ENCODE measurements at regions of chr5 and their contacts with region 1.

Region 1: GRCh38 chr5:45542421-45542820 is 153.8 kb downstream of the HCN1 start:
- DNase-seq: no peak
- ATAC-seq: no peak
- H3K4me3 ChIP-seq: no peak overlapping the region
- H3K27ac ChIP-seq: no peak overlapping the region
- H3K4me1 ChIP-seq: no peaks in the 10 kb centered on the region
- H3K27me3 ChIP-seq: no peaks in the 10 kb centered on the region
- CTCF ChIP-seq: no peak

Region 2: GRCh38 chr5:45774528-45774927 is 232.1 kb after region 1 on chr5:
- CTCF ChIA-PET with region 1: no interaction called
- POLR2A ChIA-PET with region 1: no interaction called
- intact Hi-C with region 1: loop called (anchors 10 kb)
- DNase-seq: peak; percentile 40
- ATAC-seq: no peak
- H3K4me3 ChIP-seq: no peak overlapping the region
- H3K27ac ChIP-seq: no peak overlapping the region
- H3K4me1 ChIP-seq: no peaks in the 10 kb centered on the region
- H3K27me3 ChIP-seq: no peaks in the 10 kb centered on the region
- CTCF ChIP-seq: peak; percentile 74